ENCODE measurements at regions of chr3 and their contacts with region 1.

Region 1: GRCh38 chr3:72818092-72818773 is 30.0 kb downstream of the SHQ1 start:
- DNase-seq: no peak
- H3K4me3 Mint-ChIP-seq: no peak overlapping the region
- H3K27ac Mint-ChIP-seq: peak overlapping the region; percentile 18
- H3K4me1 Mint-ChIP-seq: peaks cover 22% of the 10 kb centered on the region
- H3K27me3 Mint-ChIP-seq: no peaks in the 10 kb centered on the region

Region 2: GRCh38 chr3:71875461-71875947 is 942.7 kb before region 1 on chr3:
- intact Hi-C with region 1: loop called (anchors 1 kb)
- DNase-seq: peak; percentile 93
- H3K4me3 Mint-ChIP-seq: peak overlapping the region; percentile 14
- H3K27ac Mint-ChIP-seq: peak overlapping the region; percentile 74
- H3K4me1 Mint-ChIP-seq: peaks cover 28% of the 10 kb centered on the region
- H3K27me3 Mint-ChIP-seq: peaks cover 12% of the 10 kb centered on the region

Region 3: GRCh38 chr3:71978150-71978721 is 840.0 kb before region 1 on chr3:
- intact Hi-C with region 1: loop called (anchors 1 kb)
- DNase-seq: peak; percentile 76
- H3K4me3 Mint-ChIP-seq: peak overlapping the region; percentile 59
- H3K27ac Mint-ChIP-seq: peak overlapping the region; percentile 88
- H3K4me1 Mint-ChIP-seq: peaks cover 45% of the 10 kb centered on the region
- H3K27me3 Mint-ChIP-seq: no peaks in the 10 kb centered on the region

Region 4: DNA sequence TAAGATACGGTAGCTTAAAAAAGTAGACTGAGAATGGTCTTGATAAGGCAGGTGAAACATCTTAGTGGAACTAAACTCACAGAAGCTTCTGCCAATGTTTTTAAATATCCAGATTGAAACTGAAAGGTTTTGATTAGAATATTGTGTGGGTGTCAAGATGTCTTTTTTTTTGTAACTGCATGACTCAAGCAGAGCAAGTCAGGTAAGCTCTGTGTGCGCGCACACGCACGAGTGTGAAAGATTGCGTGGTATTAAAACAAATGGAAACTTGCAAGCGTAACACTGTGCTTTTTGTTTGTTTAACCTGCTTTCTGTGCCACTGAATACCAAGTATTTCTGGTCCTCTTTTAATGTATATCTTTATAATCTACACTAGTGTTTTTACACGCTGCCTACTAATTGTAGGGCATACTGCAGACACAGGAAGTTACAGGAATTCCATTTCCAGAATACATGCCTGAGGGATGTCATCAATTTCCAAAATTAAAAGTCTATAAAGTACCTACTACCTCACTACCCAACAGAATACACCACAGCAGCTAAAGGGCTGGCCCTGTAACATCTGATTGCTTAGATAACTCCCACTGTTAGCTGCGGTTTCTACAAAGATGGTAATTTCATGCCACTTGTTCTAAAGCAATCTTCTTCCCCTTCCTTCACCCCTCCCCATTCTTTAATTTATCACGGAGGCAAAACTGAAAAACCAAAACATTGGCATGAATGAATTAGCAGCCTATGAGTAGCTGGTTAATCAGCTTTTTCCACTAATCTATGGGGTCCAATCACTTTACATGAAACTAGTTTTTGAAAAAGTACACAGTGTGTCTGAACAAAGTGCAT is 442.8 kb before region 1 on chr3:
- intact Hi-C with region 1: loop called (anchors 5 kb)
- DNase-seq: peak; percentile 68
- H3K4me3 Mint-ChIP-seq: peak overlapping the region; percentile 43
- H3K27ac Mint-ChIP-seq: peak overlapping the region; percentile 80
- H3K4me1 Mint-ChIP-seq: peaks cover 47% of the 10 kb centered on the region
- H3K27me3 Mint-ChIP-seq: no peaks in the 10 kb centered on the region

Region 5: GRCh38 chr3:72482589-72483321 is 335.5 kb before region 1 on chr3:
- intact Hi-C with region 1: loop called (anchors 1 kb)
- DNase-seq: peak; percentile 85
- H3K4me3 Mint-ChIP-seq: peak overlapping the region; percentile 78
- H3K27ac Mint-ChIP-seq: peak overlapping the region; percentile 96
- H3K4me1 Mint-ChIP-seq: peaks cover 67% of the 10 kb centered on the region
- H3K27me3 Mint-ChIP-seq: no peaks in the 10 kb centered on the region

Region 6: GRCh38 chr3:72665701-72666443 is 152.4 kb before region 1 on chr3:
- intact Hi-C with region 1: loop called (anchors 2 kb)
- DNase-seq: peak; percentile 85
- H3K4me3 Mint-ChIP-seq: no peak overlapping the region
- H3K27ac Mint-ChIP-seq: no peak overlapping the region
- H3K4me1 Mint-ChIP-seq: peaks cover 2% of the 10 kb centered on the region
- H3K27me3 Mint-ChIP-seq: no peaks in the 10 kb centered on the region

Region 7: DNA sequence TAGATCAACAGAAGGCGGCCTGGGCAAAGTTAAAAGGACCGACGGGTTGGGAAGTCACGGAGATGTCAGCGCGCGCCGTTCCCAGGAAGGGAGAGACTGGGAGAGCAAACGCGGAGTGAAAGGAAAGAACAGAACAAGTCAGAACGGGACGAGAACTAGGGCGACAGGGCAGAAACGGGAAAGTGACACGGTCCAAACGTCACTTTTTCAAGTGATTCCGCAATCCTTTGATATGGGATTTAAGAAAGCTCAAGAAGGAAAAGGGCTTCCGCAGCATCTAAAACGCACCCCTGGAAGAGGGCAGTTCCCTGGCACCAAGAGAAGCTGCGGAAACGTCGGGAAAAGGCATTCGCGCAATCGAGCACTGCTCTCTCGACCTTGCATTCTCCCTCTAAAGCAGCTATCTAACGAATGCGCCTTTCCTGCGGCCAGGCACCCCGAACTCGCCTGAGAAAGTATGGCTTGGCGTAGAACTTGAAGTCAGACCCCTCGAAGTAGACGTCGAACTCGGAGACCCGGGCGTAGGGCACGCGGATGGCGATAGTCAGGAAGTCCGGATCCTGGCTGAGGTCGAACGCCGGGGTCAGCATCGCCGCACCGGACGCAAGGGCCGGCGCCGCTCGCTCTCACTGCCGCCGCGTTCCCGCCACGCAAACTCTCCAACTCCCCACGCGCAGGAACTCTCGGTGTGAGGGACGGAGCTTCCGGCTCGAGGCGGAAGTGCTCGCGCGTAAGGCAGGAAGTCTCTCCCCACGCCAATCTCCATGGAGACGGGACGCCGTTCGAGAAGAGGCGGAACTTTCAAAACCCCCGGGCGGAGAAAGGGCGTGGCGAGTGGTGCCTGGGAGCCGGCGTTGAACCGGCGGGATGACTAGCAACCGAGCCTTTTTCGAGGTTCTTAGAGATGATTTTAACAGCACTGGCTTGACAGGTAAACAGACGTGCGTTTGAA is 29.8 kb after region 1 on chr3 and contains the start of gene SHQ1:
- intact Hi-C with region 1: loop called (anchors 2 kb)
- DNase-seq: peak; percentile 99
- H3K4me3 Mint-ChIP-seq: peak within 1 kb of the TSS; percentile 93
- H3K27ac Mint-ChIP-seq: peak within 1 kb of the TSS; percentile 91
- H3K4me1 Mint-ChIP-seq: peaks cover 41% of the 10 kb centered on the region
- H3K27me3 Mint-ChIP-seq: no peaks in the 10 kb centered on the region
- total RNA-seq, gene SHQ1: 46.8 and 47.2 TPM in 2 replicates

Measured in activated CD4-positive, alpha-beta T cell treated with anti-CD3 and anti-CD28 coated beads, Interleukin-2, amount 10 ng/mL, durations not matched to agents 24 days and 14 days (primary cell).